PC-3 (cell line): ENCODE measurements at regions of chr4 and their contacts with region 1.

Region 1: GRCh38 chr4:110533940-110534339 is 58.0 kb downstream of the ENPEP start:
- DNase-seq: peak; percentile 90
- ATAC-seq: peak; percentile 100
- H3K4me3 ChIP-seq: no peak overlapping the region
- H3K27ac ChIP-seq: peak overlapping the region; percentile 83
- H3K4me1 ChIP-seq: peaks cover 6% of the 10 kb centered on the region
- H3K27me3 ChIP-seq: no peaks in the 10 kb centered on the region
- CTCF ChIP-seq: no peak

Region 2: GRCh38 chr4:110586131-110586850 is 52.4 kb after region 1 on chr4:
- CTCF ChIA-PET with region 1: interaction called, 6 read pairs
- POLR2A ChIA-PET with region 1: no interaction called
- intact Hi-C with region 1: loop called (anchors 5 kb)
- DNase-seq: peak; percentile 72
- ATAC-seq: peak; percentile 78
- H3K4me3 ChIP-seq: peak overlapping the region; percentile 55; the same call in 1 of the 2 replicates
- H3K27ac ChIP-seq: no peak overlapping the region
- H3K4me1 ChIP-seq: no peaks in the 10 kb centered on the region
- H3K27me3 ChIP-seq: no peaks in the 10 kb centered on the region
- CTCF ChIP-seq: peak; percentile 66